Mammary epithelial cell (primary cell): ENCODE measurements at regions of chr19 and their contacts with region 1.

Region 1: GRCh38 chr19:5557691-5558090 is 10.1 kb downstream of the TINCR start:
- DNase-seq: peak; percentile 81
- H3K4me3 ChIP-seq: peak overlapping the region; percentile 3 to 32 (median 10)
- H3K27ac ChIP-seq: peak overlapping the region; percentile 84
- H3K4me1 ChIP-seq: peaks cover 17% of the 10 kb centered on the region
- H3K27me3 ChIP-seq: no peaks in the 10 kb centered on the region
- CTCF ChIP-seq: peak in 1 of 2 donors; percentile 31

Region 2: GRCh38 chr19:5131031-5131505 is 426.6 kb before region 1 on chr19:
- CTCF ChIA-PET with region 1: no interaction called
- dilution Hi-C with region 1: loop called (anchors 5 kb)
- in situ Hi-C with region 1: no loop called
- intact Hi-C with region 1: no loop called
- DNase-seq: no peak
- H3K4me3 ChIP-seq: no peak overlapping the region
- H3K27ac ChIP-seq: no peak overlapping the region
- H3K4me1 ChIP-seq: no peaks in the 10 kb centered on the region
- H3K27me3 ChIP-seq: no peaks in the 10 kb centered on the region
- CTCF ChIP-seq: no peak

Region 3: DNA sequence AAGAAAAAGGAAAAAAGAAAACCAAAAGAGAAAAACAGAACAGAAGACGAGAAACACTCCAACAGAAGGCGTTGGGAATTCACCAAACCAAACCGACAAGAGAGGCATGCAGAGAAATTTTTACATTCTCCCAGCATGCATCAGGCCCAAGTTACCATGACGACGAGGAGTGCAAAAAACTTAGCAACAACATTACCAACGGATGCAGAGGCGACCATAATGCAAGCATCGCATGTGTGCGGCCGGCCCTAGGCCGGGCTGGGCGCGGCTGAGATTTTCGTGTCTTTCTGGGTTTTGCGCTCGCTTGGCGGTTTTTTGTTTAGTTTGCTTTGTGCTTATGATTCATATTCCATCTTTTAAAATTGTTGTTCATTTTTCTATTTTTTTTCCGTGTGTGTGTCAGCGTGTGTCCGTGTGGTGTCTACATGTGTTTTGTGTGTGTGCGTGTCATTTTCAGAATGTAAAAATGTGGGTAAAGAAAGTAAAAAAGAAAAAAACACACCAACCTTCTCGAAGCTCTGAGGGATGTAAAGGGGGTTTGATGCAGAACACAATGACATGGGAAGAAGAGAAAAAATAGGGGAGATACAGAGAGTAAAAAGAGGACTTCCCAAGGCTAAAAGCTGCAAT is 302.0 kb before region 1 on chr19:
- CTCF ChIA-PET with region 1: no interaction called
- dilution Hi-C with region 1: loop called (anchors 5 kb)
- in situ Hi-C with region 1: no loop called
- intact Hi-C with region 1: no loop called
- DNase-seq: no peak
- H3K4me3 ChIP-seq: no peak overlapping the region
- H3K27ac ChIP-seq: no peak overlapping the region
- H3K4me1 ChIP-seq: peaks cover 5% of the 10 kb centered on the region
- H3K27me3 ChIP-seq: peaks cover 2% of the 10 kb centered on the region
- CTCF ChIP-seq: no peak

Region 4: DNA sequence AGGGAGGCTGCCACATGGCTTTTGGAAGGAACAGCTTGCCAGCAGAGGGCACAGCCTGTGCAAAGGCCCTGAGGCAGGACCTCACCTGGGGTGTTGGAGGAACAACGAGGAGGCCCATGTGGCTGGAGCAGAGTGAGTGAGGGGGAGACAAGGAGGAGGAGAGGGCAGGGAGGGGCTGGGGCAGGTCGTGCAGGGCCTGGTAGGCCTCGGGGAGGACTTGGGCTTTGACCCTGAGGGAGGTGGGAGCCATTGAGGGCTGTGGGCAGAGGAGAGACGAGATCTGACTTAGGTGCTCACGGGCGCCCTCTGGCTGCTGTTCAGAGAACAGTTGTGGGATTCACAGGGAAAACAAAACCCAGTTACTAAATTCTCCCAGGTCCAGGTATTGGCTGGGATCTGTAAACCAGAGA is 77.3 kb before region 1 on chr19:
- CTCF ChIA-PET with region 1: no interaction called
- dilution Hi-C with region 1: loop called (anchors 5 kb)
- in situ Hi-C with region 1: no loop called
- intact Hi-C with region 1: no loop called
- DNase-seq: no peak
- H3K4me3 ChIP-seq: no peak overlapping the region
- H3K27ac ChIP-seq: no peak overlapping the region
- H3K4me1 ChIP-seq: no peaks in the 10 kb centered on the region
- H3K27me3 ChIP-seq: peaks cover 13% of the 10 kb centered on the region
- CTCF ChIP-seq: peak; percentile 43 to 54

Region 5: GRCh38 chr19:5665796-5666513 is 108.3 kb after region 1 on chr19:
- CTCF ChIA-PET with region 1: no interaction called
- dilution Hi-C with region 1: no loop called
- in situ Hi-C with region 1: no loop called
- intact Hi-C with region 1: no loop called
- DNase-seq: peak; percentile 48
- H3K4me3 ChIP-seq: no peak overlapping the region
- H3K27ac ChIP-seq: no peak overlapping the region
- H3K4me1 ChIP-seq: no peaks in the 10 kb centered on the region
- H3K27me3 ChIP-seq: no peaks in the 10 kb centered on the region
- CTCF ChIP-seq: peak in 1 of 2 donors; percentile 22

Region 6: DNA sequence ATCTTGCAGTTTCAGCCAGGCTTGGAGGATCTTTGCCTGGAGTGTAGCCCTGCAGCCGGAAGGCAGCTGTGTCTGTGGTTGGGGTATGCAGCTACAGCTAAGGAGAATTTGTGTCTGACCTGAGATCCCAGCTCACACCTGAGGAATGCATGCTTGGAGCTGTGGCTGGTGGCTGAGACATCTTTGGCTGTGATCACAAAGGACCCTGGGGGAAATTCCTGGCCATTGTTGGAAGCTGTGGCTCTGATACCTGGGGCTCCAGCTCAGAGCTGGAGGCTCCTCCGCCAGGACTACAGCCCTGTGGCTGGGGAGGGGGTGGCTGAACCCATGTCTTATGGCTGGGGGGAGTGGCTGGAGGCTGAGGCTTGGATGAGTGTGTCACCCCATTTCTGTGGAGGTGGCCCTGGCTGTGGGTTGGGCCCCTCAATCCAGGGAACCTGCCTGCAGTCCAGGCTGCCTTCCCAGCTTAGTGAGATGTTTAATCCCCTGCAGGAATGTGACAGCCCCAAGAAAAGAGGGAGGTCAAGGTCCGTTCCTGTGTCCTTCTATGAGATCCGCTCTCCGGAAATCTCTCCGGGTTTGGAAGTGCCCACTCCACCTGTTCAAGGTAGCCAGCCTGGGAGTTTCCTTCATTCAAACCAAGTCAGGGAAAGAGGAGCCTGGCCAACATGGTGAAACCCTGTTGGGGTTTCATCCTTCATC is 1818.6 kb after region 1 on chr19:
- CTCF ChIA-PET with region 1: interaction called, 16 read pairs
- dilution Hi-C with region 1: no loop called
- in situ Hi-C with region 1: no loop called
- intact Hi-C with region 1: no loop called
- DNase-seq: peak; percentile 59
- H3K4me3 ChIP-seq: no peak overlapping the region
- H3K27ac ChIP-seq: no peak overlapping the region
- H3K4me1 ChIP-seq: peaks cover 11% of the 10 kb centered on the region
- H3K27me3 ChIP-seq: no peaks in the 10 kb centered on the region
- CTCF ChIP-seq: no peak